ENCODE measurements at regions of chr2 and their contacts with region 1.

Region 1: GRCh38 chr2:18435421-18436037 is 124.9 kb downstream of the RDH14 start:
- DNase-seq: no peak

Region 2: DNA sequence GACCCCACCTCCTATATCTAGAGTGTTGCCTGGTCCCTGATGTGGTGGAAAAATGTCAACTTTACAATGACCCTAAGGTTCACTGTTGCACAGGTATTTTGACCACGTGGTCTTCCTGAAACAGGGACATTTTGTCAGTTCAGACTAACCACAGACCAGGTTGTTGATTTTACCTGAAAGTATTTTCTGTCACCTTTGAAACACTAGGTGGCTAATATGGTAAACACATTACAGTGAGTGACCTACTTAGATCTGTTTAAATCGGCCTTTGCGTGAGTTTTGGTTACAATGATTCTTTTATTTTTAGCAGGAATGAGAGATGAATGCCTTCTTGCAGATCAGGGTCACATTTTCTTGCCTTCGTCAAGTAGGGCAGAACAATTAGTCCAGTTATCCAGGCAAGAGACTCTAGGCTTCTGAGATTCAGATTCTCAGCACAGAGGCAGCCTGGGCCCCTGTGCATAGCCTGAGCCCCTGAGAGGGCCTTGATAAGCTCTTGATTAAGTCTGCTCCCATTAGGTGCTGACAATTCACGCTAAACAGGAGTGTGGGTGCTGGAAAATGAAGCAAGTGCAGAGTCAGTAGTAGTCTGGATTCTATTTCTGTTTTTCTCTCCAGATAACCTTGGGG is 330.8 kb before region 1 on chr2:
- intact Hi-C with region 1: no loop called
- DNase-seq: no peak

Region 3: DNA sequence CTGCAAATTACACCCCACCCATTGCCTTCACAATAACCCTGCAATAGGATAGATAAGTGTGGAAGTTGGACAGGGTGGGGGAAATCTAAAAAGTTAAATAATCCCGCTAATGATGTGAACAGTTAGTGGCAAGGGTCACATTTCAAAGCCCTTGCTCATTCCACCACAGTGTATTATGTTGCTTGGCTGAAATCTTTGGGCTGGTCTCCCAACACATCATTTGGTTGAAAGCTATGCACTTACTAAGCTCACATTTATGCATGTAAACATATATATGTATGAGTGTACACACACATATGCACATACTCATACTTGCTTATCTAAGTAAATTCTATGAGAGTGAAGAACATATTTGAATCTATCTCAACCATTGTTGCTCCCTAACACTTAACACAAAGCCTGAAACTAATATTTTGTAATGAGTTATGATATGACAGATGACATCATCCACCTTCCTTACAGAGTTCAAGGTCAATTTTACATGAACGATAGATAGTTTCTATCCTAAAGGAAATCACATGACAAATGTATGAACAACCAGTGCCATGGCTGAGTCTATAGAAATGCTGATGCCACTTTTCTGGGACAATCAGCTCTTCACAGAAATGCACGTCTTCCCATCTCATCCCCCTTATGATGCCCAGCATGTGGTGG is 72.7 kb before region 1 on chr2:
- intact Hi-C with region 1: no loop called
- DNase-seq: no peak

Region 4: GRCh38 chr2:18387441-18388206 is 47.9 kb before region 1 on chr2:
- intact Hi-C with region 1: loop called in 1 of 2 experiments (anchors 2 kb)
- DNase-seq: peak; percentile 89

Region 5: DNA sequence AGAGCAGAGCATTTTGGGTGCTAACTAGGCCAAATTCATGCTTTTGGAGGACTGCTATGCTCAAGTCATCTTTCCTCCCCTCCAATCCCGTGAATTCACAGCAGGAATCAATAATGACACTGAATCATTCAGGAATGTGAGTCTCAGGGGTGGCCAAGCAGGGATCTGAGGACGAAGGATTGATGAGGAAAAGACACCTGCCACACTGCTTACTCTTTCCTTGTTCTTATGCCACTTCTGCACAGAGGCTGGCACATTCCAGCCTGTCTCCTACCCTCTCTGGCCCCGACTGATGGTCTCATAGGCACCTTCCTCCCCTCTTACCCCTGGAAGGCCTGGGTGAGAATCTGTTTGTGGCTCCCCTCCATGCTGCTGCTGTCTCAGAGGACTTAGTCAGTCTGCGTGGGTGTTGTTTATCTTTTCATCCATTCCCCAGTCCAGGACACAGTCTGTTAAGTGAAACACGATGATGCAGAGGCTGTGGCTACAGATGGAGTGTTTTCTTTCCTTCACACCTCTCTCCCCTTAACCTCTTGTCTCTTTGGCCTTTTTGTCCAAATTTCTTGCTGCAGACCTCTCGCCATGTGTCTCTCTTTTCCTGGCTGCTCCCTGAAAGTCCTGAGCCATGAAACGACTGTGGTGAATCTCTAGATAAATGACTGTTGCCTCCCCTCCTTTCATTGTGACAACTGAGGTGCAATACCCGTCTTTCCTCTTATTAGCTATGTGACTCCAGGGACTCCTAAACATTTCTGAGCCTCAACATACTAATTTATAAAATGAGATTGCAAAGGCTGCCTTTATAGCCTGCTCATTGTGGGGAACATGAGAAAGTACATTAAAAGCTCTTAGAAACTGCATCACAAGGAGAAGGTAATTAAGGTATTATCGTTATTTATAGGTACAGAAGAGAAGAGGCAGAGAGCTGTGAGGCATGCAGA is 38.0 kb after region 1 on chr2:
- intact Hi-C with region 1: no loop called
- DNase-seq: no peak

Region 6: GRCh38 chr2:18626256-18626668 is 190.7 kb after region 1 on chr2:
- intact Hi-C with region 1: loop called (anchors 5 to 10 kb)
- DNase-seq: no peak

Measured in posterior vena cava (tissue), 2 donors.